Endothelial cell of umbilical vein (primary cell): ENCODE measurements at regions of chr13 and their contacts with region 1.

Region 1: GRCh38 chr13:27826379-27827353 is 34.4 kb downstream of the GSX1 start:
- DNase-seq: peak; percentile 88
- H3K4me3 ChIP-seq: peak overlapping the region in 1 of 3 experiments; percentile 30
- H3K27ac ChIP-seq: no peak overlapping the region
- H3K4me1 ChIP-seq: no peaks in the 10 kb centered on the region
- H3K27me3 ChIP-seq: peaks cover 28 to 44% of the 10 kb centered on the region in 2 experiments
- CTCF ChIP-seq: peak; percentile 85 to 93
- POLR2A ChIP-seq: no peak

Region 2: DNA sequence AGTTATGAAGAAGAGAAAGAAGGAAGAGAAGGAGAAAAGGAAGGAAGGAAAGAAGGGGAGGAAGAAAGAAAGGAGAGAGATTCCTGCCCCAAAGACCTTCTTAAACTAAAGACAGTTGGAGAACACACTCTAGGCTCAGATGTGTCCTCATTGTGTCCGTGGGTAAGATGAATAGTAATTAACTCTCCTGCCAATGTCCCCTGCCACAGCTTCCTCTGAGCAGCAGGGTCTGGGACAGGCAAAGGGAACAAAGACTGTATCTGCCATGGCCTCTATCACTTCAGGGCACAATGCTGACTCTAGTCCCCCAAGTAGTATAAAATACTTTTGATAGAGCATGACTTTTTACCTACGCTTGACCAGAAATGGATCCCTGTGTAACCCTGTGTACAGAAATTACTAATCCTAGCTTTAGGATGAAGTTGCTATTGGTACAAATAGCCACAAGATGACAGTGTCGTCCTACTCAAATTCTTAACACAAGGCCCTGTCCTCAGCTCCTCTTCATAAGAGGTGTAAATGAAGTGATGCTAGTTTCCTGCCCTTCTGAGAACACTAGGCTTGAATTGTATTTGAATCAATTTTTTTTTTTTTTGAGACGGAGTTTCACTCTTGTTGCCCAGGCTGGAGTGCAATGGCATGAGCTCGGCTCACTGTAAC is 879.9 kb before region 1 on chr13:
- CTCF ChIA-PET with region 1: interaction called, 18 read pairs
- POLR2A ChIA-PET with region 1: no interaction called
- dilution Hi-C with region 1: no loop called
- intact Hi-C with region 1: no loop called
- DNase-seq: peak; percentile 39
- H3K4me3 ChIP-seq: no peak overlapping the region
- H3K27ac ChIP-seq: no peak overlapping the region
- H3K4me1 ChIP-seq: no peaks in the 10 kb centered on the region
- H3K27me3 ChIP-seq: peaks cover 10 to 12% of the 10 kb centered on the region in 2 experiments
- CTCF ChIP-seq: peak; percentile 34 to 52
- POLR2A ChIP-seq: no peak

Region 3: GRCh38 chr13:27022571-27023311 is 803.9 kb before region 1 on chr13:
- CTCF ChIA-PET with region 1: no interaction called
- POLR2A ChIA-PET with region 1: no interaction called
- dilution Hi-C with region 1: no loop called
- intact Hi-C with region 1: no loop called
- DNase-seq: no peak
- H3K4me3 ChIP-seq: no peak overlapping the region
- H3K27ac ChIP-seq: no peak overlapping the region
- H3K4me1 ChIP-seq: no peaks in the 10 kb centered on the region
- H3K27me3 ChIP-seq: peaks cover 6 to 19% of the 10 kb centered on the region in 2 experiments
- CTCF ChIP-seq: no peak
- POLR2A ChIP-seq: no peak

Region 4: DNA sequence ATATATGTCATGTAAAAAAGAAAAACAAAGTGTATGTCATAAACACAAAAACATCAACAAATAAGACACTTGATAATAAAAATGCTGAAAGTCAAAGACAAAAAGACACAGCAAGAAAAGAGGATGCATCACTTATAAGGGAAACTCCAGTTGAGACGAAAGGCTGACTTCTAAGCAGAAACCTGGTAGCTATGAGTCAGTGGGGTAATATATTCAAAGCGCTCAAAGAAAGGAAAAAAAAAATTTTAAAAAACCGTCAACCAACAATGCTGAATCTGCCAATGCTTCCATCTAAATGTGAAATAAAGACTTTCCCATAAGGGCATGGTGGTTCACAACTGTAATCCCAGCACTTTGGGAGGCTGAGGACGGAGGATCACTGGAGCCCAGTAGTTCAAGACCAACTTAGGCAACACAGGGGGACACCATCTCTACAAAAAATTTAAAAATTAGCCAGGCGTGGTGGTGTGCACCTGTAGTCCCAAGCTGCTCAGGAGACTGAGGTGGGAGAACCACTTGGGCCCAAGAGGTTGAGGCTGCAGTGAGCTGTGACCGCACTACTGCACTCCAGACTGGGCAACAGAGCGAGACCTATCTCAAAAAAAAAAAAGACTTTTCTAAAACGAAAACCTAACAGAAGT is 679.0 kb before region 1 on chr13:
- CTCF ChIA-PET with region 1: no interaction called
- POLR2A ChIA-PET with region 1: no interaction called
- dilution Hi-C with region 1: no loop called
- intact Hi-C with region 1: no loop called
- DNase-seq: no peak
- H3K4me3 ChIP-seq: no peak overlapping the region
- H3K27ac ChIP-seq: no peak overlapping the region
- H3K4me1 ChIP-seq: no peaks in the 10 kb centered on the region
- H3K27me3 ChIP-seq: no peaks in the 10 kb centered on the region
- CTCF ChIP-seq: no peak
- POLR2A ChIP-seq: no peak

Region 5: GRCh38 chr13:27406178-27406939 is 420.3 kb before region 1 on chr13:
- CTCF ChIA-PET with region 1: interaction called, 32 read pairs
- POLR2A ChIA-PET with region 1: no interaction called
- dilution Hi-C with region 1: no loop called
- intact Hi-C with region 1: loop called (anchors 1 kb)
- DNase-seq: peak; percentile 47
- H3K4me3 ChIP-seq: no peak overlapping the region
- H3K27ac ChIP-seq: no peak overlapping the region
- H3K4me1 ChIP-seq: no peaks in the 10 kb centered on the region
- H3K27me3 ChIP-seq: peaks cover 13 to 17% of the 10 kb centered on the region in 2 experiments
- CTCF ChIP-seq: peak; percentile 31 to 42
- POLR2A ChIP-seq: no peak

Region 6: GRCh38 chr13:27481766-27482165 is 344.9 kb before region 1 on chr13:
- CTCF ChIA-PET with region 1: interaction called, 38 read pairs
- POLR2A ChIA-PET with region 1: no interaction called
- dilution Hi-C with region 1: no loop called
- intact Hi-C with region 1: loop called (anchors 1 kb)
- DNase-seq: peak; percentile 28
- H3K4me3 ChIP-seq: no peak overlapping the region
- H3K27ac ChIP-seq: no peak overlapping the region
- H3K4me1 ChIP-seq: no peaks in the 10 kb centered on the region
- H3K27me3 ChIP-seq: peaks cover 12 to 21% of the 10 kb centered on the region in 2 experiments
- CTCF ChIP-seq: peak; percentile 82 to 86
- POLR2A ChIP-seq: no peak

Region 7: DNA sequence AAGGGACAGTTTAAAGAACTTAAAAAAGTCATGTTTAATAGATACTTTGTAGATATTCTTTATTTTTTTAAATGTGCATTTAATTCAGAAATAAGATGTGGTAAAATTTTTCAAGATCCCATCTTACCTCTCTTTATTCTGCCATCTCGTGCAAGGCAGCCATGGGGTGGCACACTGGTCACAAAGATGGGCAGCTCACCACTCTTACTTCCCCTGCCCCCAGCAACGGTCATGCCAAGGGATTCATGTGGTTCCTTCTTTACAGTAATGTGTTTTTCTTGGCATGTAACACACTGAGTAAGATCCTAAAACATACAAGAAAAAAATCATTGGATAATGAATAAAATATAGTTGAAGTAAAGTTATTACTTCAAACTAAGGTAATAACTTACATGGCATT is 270.6 kb before region 1 on chr13:
- CTCF ChIA-PET with region 1: interaction called, 198 read pairs
- POLR2A ChIA-PET with region 1: no interaction called
- dilution Hi-C with region 1: no loop called
- intact Hi-C with region 1: loop called (anchors 1 kb)
- DNase-seq: peak; percentile 93
- H3K4me3 ChIP-seq: no peak overlapping the region
- H3K27ac ChIP-seq: no peak overlapping the region
- H3K4me1 ChIP-seq: peaks cover 9% of the 10 kb centered on the region
- H3K27me3 ChIP-seq: no peaks in the 10 kb centered on the region
- CTCF ChIP-seq: peak; percentile 26 to 53
- POLR2A ChIP-seq: no peak

Region 8: GRCh38 chr13:27792393-27793218 is 34.1 kb before region 1 on chr13 and contains the start of gene GSX1:
- CTCF ChIA-PET with region 1: interaction called, 13 read pairs
- POLR2A ChIA-PET with region 1: no interaction called
- dilution Hi-C with region 1: no loop called
- intact Hi-C with region 1: no loop called
- DNase-seq: peak; percentile 67
- H3K4me3 ChIP-seq: peak within 1 kb of the TSS in 1 of 3 experiments; percentile 8
- H3K27ac ChIP-seq: no peak within 1 kb of the TSS
- H3K4me1 ChIP-seq: no peaks in the 10 kb centered on the region
- H3K27me3 ChIP-seq: peaks cover 81 to 94% of the 10 kb centered on the region in 2 experiments
- CTCF ChIP-seq: no peak
- POLR2A ChIP-seq: no peak
- total RNA-seq, gene GSX1: not detected in 2 replicates

Region 9: GRCh38 chr13:27905650-27906049 is 79.0 kb after region 1 on chr13:
- CTCF ChIA-PET with region 1: no interaction called
- POLR2A ChIA-PET with region 1: no interaction called
- dilution Hi-C with region 1: no loop called
- intact Hi-C with region 1: no loop called
- DNase-seq: no peak
- H3K4me3 ChIP-seq: no peak overlapping the region
- H3K27ac ChIP-seq: no peak overlapping the region
- H3K4me1 ChIP-seq: no peaks in the 10 kb centered on the region
- H3K27me3 ChIP-seq: peaks cover 7 to 12% of the 10 kb centered on the region in 2 experiments
- CTCF ChIP-seq: no peak
- POLR2A ChIP-seq: no peak